GM10248 (cell line): ENCODE measurements at regions of chr1 and their contacts with region 1.

Region 1: GRCh38 chr1:241485554-241485992 is 34.0 kb downstream of the FH start:
- DNase-seq: peak; percentile 26
- CTCF ChIP-seq: peak; percentile 48

Region 2: DNA sequence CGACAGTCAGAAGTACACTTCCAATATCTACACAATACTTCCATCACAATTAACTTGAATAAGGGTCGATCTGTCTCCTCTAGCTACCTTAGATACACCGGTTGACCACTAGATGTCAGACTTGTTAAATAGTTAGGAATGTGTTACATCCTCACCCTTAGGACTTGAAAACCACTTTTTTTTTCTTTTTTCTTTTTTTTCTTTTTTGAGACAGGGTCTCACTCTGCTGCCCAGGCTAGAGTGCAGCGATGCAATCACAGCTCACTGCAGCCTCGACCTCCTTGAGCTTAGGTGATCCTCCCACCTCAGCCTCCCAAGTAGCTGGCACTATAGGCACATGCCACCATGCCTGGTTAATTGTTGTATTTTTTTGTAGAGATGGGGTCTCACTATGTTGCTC is 753.2 kb before region 1 on chr1:
- CTCF ChIA-PET with region 1: interaction called, 11 read pairs
- POLR2A ChIA-PET with region 1: no interaction called
- DNase-seq: peak; percentile 58
- CTCF ChIP-seq: peak; percentile 66

Region 3: GRCh38 chr1:240888039-240888786 is 597.4 kb before region 1 on chr1:
- CTCF ChIA-PET with region 1: interaction called, 15 read pairs
- POLR2A ChIA-PET with region 1: no interaction called
- DNase-seq: peak; percentile 60
- CTCF ChIP-seq: peak; percentile 68

Region 4: DNA sequence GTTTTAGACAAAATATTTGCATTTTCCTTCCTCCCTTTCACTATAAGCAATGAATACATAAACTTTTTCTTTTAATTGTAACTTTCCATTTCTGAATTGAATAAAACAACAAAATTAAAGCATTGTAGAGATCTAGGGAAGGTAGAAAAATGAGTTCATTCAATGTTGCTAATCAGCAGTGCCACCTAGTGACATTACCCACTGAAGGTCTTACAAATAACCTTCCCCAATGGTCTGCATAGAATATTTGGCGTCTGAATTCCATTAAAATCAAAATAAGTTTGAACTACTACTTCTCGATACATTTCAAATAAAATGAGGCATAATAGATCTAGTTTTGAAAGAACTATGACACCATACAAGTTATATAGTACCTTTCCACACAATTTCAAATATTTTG is 14.3 kb after region 1 on chr1:
- CTCF ChIA-PET with region 1: interaction called, 14 read pairs
- POLR2A ChIA-PET with region 1: no interaction called
- DNase-seq: no peak
- CTCF ChIP-seq: peak; percentile 34